CD8-positive, alpha-beta T cell (primary cell): ENCODE measurements at regions of chr7 and their contacts with region 1.

Region 1: DNA sequence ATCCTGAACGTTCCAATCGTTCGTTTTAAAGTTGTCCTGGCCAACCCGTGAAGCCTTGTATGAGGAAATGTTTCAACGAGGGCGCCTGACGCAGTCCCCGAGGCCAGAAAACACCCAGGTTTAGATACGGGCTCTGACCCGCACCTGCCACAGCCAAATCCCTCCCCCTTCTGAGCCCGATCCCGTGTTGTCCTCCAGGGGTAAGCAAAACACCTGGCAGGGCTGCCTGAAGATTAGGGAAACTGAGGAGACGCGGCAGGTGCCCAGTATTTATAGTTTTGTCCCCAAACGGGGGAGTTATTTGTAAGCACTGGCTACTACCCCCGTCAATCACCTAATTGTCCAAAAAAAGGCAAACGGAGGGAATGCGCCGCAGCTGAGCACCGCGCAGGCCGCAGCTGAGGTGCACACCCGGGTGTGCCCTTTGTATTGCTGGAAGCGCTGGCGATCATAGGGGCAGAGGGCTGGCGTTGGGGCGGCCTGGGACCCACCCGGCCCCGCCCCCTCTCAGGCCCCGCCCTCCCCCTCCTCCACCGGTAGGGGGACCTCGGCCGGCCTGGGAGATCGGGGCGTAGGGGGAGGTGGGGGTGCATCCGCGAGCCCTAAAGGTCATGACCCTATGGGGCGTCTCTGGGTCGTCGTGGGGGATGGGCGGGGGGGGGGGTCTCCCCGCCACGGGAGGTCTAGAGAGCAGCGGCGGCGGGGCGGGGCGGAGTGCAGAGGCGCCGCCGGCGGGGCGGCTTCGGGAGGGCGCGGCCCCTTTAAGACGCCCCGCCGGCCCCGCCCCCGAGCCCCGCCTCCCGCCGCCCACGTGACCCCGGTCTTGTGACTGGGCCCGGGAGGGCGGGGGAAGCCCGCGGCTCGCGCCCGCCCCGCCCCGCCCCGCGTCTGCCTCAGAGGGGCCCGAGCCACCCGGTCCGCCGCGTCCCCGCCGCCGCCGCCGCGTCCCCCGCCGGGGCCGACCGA is at the start of gene BRI3:
- DNase-seq: peak; percentile 86 to 95 (median 92)
- ATAC-seq: peak; percentile 81
- H3K4me3 ChIP-seq: peak within 1 kb of the TSS; percentile 72 to 88
- H3K4me3 Mint-ChIP-seq: peak within 1 kb of the TSS; percentile 91
- H3K27ac ChIP-seq: peak within 1 kb of the TSS; percentile 62 to 67
- H3K27ac Mint-ChIP-seq: peak within 1 kb of the TSS; percentile 90
- H3K4me1 ChIP-seq: peaks cover 42% of the 10 kb centered on the region
- H3K4me1 Mint-ChIP-seq: peaks cover 33% of the 10 kb centered on the region
- H3K27me3 ChIP-seq: no peaks in the 10 kb centered on the region
- H3K27me3 Mint-ChIP-seq: no peaks in the 10 kb centered on the region
- CTCF ChIP-seq: no peak
- total RNA-seq, gene BRI3: 70.6 to 70.8 TPM

Region 2: DNA sequence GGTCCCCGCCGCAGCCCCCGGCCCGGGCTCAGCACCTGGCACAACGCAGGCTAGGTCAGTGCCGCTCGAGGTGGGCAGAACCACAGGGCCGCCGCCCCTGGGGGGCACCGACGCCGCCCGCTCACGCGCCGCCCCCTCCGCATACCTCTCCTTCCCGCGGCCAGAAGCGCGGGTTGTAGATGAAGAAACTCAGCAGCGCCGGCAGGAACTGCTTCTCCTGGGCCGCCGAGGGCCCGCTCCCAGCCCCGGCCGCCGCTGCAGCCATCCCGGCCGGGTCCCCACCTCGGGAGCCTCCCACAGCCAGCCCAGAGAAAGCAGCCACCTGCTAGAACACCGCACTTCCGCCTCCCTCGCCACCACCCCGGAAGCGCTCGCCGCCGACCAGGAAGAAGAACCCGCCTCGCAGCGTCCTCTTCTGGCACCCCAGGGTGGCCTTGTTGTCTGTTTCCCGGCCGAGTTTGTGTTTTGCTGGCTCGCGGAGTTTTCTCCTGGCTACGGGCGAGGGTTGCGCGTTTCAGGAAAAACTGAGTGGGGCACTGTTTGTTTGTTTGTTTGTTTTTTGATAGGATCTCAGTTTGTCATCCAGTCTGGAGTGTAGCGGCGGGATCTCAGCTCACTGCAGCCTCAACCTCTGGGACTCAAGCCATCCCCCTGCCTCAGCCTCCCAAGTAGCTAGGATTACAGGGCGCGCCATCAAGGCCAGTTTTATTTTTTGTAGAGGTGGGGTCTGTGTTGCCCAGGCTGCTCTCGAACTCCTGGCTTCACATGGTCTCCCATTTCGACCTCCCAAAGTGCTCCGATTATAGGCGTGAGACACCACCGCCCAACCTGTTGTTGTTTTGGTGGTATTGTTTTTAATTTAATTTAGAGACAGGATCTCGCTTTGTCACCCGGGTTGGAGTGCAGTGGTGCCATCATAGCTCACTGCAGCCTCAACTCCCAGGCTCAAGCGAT is 308.8 kb before region 1 on chr7:
- CTCF ChIA-PET with region 1: no interaction called
- POLR2A ChIA-PET with region 1: no interaction called
- intact Hi-C with region 1: loop called (anchors 2 to 5 kb)
- DNase-seq: peak; percentile 65 to 90 (median 84)
- ATAC-seq: peak; percentile 94
- H3K4me3 ChIP-seq: peak overlapping the region; percentile 81 to 84
- H3K4me3 Mint-ChIP-seq: peak overlapping the region; percentile 89
- H3K27ac ChIP-seq: peak overlapping the region; percentile 61 to 72
- H3K27ac Mint-ChIP-seq: peak overlapping the region; percentile 93
- H3K4me1 ChIP-seq: peaks cover 10% of the 10 kb centered on the region
- H3K4me1 Mint-ChIP-seq: peaks cover 22% of the 10 kb centered on the region
- H3K27me3 ChIP-seq: no peaks in the 10 kb centered on the region
- H3K27me3 Mint-ChIP-seq: no peaks in the 10 kb centered on the region
- CTCF ChIP-seq: peak; percentile 32

Region 3: GRCh38 chr7:98251841-98252639 is 29.0 kb before region 1 on chr7 and contains the start of gene TECPR1:
- CTCF ChIA-PET with region 1: interaction called, 10 read pairs
- POLR2A ChIA-PET with region 1: interaction called, 27 read pairs
- intact Hi-C with region 1: loop called (anchors 1 kb)
- DNase-seq: peak; percentile 66 to 94 (median 87)
- ATAC-seq: peak; percentile 68
- H3K4me3 ChIP-seq: peak within 1 kb of the TSS; percentile 78 to 86
- H3K4me3 Mint-ChIP-seq: peak within 1 kb of the TSS; percentile 94
- H3K27ac ChIP-seq: peak within 1 kb of the TSS; percentile 84 to 87
- H3K27ac Mint-ChIP-seq: peak within 1 kb of the TSS; percentile 99
- H3K4me1 ChIP-seq: peaks cover 47% of the 10 kb centered on the region
- H3K4me1 Mint-ChIP-seq: peaks cover 54% of the 10 kb centered on the region
- H3K27me3 ChIP-seq: no peaks in the 10 kb centered on the region
- H3K27me3 Mint-ChIP-seq: no peaks in the 10 kb centered on the region
- CTCF ChIP-seq: peak; percentile 22
- total RNA-seq, gene TECPR1: 64.4 to 68.2 TPM

Region 4: GRCh38 chr7:98400542-98401340 is 119.7 kb after region 1 on chr7 and contains the start of gene BAIAP2L1:
- CTCF ChIA-PET with region 1: interaction called, 3 read pairs
- POLR2A ChIA-PET with region 1: no interaction called
- intact Hi-C with region 1: loop called (anchors 2 kb)
- DNase-seq: peak; percentile 65 to 88 (median 77)
- ATAC-seq: peak; percentile 89
- H3K4me3 ChIP-seq: peak within 1 kb of the TSS in 1 of 2 experiments; percentile 47
- H3K4me3 Mint-ChIP-seq: peak within 1 kb of the TSS; percentile 66
- H3K27ac ChIP-seq: no peak within 1 kb of the TSS
- H3K27ac Mint-ChIP-seq: no peak within 1 kb of the TSS
- H3K4me1 ChIP-seq: peaks cover 8% of the 10 kb centered on the region
- H3K4me1 Mint-ChIP-seq: peaks cover 9% of the 10 kb centered on the region
- H3K27me3 ChIP-seq: peaks cover 0 to 8% of the 10 kb centered on the region in 2 experiments
- H3K27me3 Mint-ChIP-seq: peaks cover 24% of the 10 kb centered on the region
- CTCF ChIP-seq: peak; percentile 38
- total RNA-seq, gene BAIAP2L1: 0.43 TPM in 1 of 2 experiments, not detected in the other

Region 5: GRCh38 chr7:99143853-99144672 is 863.0 kb after region 1 on chr7 and contains the start of gene SMURF1:
- CTCF ChIA-PET with region 1: no interaction called
- POLR2A ChIA-PET with region 1: no interaction called
- intact Hi-C with region 1: loop called in 1 of 2 experiments (anchors 10 kb)
- DNase-seq: peak; percentile 41 to 89 (median 71)
- ATAC-seq: peak; percentile 37
- H3K4me3 ChIP-seq: peak within 1 kb of the TSS; percentile 66 to 85
- H3K4me3 Mint-ChIP-seq: peak within 1 kb of the TSS; percentile 93
- H3K27ac ChIP-seq: peak within 1 kb of the TSS; percentile 60 to 74
- H3K27ac Mint-ChIP-seq: peak within 1 kb of the TSS; percentile 89
- H3K4me1 ChIP-seq: peaks cover 33% of the 10 kb centered on the region
- H3K4me1 Mint-ChIP-seq: peaks cover 31% of the 10 kb centered on the region
- H3K27me3 ChIP-seq: no peaks in the 10 kb centered on the region
- H3K27me3 Mint-ChIP-seq: no peaks in the 10 kb centered on the region
- CTCF ChIP-seq: no peak
- total RNA-seq, gene SMURF1: 42.5 to 44.8 TPM